Dorsolateral prefrontal cortex (tissue), 120 donors: ENCODE measurements at regions of chr5 and their contacts with region 1.

Region 1: DNA sequence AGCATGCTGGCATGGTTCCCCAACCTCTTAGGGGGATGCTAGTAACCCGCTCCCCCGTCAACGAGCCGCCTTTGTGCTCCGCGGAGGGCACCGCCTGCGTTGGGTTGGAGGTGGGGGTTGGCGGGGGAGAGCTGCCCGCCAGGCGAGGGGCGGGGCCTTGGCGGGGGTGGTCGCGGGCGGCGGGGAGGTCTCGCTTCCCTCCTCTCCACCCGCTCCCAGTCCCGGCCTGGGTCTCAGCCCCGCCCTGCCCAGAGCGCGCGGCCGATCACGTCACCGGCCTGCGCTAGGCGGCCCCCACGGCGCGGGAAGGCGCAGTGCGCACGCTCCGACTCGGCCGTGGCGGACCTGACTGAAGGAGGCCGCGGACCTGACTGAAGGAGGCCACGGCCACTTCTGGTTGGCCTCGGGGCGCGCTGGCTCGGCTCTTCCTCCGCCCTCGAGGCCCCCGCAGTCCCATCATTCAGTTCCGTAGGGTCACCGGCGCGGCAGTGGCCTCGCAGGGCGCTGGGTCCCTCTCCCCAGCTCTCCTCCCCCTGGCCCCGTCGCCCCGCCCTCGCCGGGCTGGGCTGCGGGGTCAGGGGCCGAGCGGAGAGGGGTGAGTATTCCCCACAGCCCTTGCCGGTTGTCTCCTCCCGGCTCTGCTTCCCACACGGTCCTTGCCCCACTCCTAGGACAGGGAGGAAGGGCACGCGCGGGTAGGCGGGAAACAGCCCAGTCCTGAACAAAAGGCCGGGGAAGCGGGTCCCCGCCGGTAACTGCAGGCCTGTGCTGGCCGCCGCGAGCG is at the start of gene ATG10:
- DNase-seq: peak; percentile 81 to 98 (median 92)
- H3K4me3 ChIP-seq: peak within 1 kb of the TSS; percentile 55 to 96 (median 80)
- H3K27ac ChIP-seq: peak within 1 kb of the TSS; percentile 88 to 100 (median 99)
- H3K27me3 ChIP-seq: no peaks in the 10 kb centered on the region
- CTCF ChIP-seq: peak in 14 of 56 donors; percentile 2 to 44 (median 17)
- total RNA-seq, gene ATG10: 6.7 to 22.6 (median 12.7) TPM

Region 2: DNA sequence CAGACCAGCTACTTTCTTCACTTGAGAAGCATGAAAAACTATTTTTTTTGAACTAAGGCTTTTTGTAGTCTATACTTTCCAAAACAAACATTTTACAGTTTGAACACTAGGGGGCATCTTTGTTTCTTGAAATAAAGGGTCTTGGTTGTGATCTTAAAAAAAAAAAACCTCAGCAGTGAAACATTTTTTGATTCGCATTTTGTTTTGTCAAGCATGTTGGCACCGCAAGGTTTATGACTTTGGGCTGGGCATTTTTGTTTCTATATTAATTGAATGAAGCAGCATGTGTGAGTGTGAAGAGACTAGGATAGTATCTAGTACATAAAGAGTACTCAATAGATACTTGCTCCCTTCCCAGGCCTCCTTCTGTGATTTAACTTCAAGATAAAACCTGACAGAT is 546.3 kb before region 1 on chr5:
- intact Hi-C with region 1: loop called in 1 of 2 experiments (anchors 10 kb)
- DNase-seq: no peak
- H3K4me3 ChIP-seq: peak overlapping the region in 1 of 59 donors; percentile 14
- H3K27ac ChIP-seq: peak overlapping the region in 41 of 59 donors; percentile 0 to 67 (median 39)
- H3K27me3 ChIP-seq: no peaks in the 10 kb centered on the region
- CTCF ChIP-seq: peak; percentile 64 to 93 (median 79)

Region 3: DNA sequence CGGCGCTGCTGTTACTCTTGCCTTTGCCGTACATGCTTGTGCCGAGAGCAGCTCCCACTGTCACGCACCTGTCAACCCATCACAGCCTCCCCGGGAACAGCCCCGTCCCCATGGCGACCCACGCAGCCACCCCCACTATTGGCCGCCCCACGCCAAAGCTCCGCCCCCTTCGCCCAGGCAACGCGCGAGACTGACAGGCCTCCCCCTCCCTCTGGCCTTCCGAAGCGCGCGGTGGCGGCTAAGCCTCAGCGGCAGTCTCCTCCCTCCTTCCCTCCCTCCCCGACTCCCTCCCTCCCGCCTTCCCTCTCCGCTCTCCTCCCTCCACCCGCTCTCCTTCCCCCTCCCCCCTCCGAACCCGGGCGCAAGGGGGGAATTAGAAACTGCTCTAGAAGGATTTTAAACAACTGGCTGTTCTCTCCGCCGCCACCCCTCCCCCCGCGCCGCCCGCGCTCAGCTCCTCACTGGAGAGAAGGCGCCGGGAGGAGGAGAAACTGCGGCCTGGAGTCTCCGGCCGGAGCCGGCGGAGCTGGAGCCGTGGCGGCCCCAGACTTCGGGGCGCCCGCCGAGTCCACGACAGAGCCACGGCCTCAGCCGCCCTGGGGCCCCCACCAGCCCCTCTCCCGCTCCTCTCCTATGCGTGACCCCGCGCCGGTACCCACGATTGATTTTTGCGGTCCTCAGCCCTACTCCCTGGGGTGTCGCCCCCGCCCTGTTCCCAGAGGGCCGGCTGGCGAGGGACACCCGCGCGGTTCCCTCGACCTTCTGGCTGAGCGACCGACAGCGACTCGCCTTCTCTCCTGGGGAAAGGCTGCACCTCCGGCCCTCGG is 220.7 kb before region 1 on chr5 and contains the start of gene SSBP2:
- intact Hi-C with region 1: loop called (anchors 1 kb)
- DNase-seq: peak; percentile 98 to 100 (median 99)
- H3K4me3 ChIP-seq: peak within 1 kb of the TSS; percentile 57 to 97 (median 80)
- H3K27ac ChIP-seq: peak within 1 kb of the TSS; percentile 95 to 100 (median 99)
- H3K27me3 ChIP-seq: no peaks in the 10 kb centered on the region
- CTCF ChIP-seq: peak in 11 of 56 donors; percentile 5 to 38 (median 25)
- total RNA-seq, gene SSBP2: 66.2 to 139 (median 94.4) TPM

Region 4: GRCh38 chr5:81851481-81852178 is 120.3 kb before region 1 on chr5:
- intact Hi-C with region 1: loop called (anchors 2 kb)
- DNase-seq: peak; percentile 94 to 98 (median 96)
- H3K4me3 ChIP-seq: peak overlapping the region; percentile 44 to 81 (median 61)
- H3K27ac ChIP-seq: peak overlapping the region; percentile 81 to 99 (median 97)
- H3K27me3 ChIP-seq: no peaks in the 10 kb centered on the region
- CTCF ChIP-seq: peak in 27 of 56 donors; percentile 4 to 49 (median 25)

Region 5: DNA sequence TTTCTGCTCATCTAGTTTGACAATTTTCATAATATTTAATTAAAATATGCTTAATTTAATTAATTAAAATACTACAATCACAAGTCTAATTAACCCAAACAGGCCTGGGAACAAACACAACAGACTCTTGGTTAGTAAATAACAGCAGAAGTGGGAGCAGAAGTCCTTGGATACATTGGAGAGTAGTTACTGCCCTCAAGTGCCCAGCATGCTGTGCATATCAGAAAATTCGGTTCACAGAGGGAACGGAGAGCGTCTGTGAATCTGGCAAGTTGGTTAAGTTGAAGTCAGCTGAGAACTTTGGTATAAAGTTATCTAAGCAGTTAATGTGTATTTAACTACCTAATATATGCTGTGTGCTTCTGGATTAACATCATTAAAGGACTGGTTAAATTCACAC is 87.0 kb before region 1 on chr5:
- intact Hi-C with region 1: no loop called
- DNase-seq: no peak
- H3K4me3 ChIP-seq: no peak overlapping the region
- H3K27ac ChIP-seq: no peak overlapping the region
- H3K27me3 ChIP-seq: no peaks in the 10 kb centered on the region
- CTCF ChIP-seq: peak in 34 of 56 donors; percentile 10 to 66 (median 36)

Region 6: DNA sequence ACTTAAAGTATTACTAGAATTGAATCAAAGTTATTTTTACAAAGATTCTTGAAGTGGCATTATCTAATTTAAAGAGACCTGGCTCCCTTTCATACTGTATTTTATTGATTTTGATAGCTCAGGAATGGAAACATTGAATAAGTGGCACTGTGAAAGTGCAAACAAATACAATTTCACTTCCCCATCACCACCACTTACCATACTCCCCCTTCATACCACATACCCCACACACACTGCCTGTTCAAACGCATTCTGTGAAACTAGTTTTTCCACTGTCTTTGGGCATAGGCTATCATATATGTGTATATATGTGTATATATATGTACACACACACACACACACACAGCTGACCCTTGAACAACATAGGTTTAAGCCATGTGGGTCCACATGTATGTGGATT is 62.2 kb before region 1 on chr5:
- intact Hi-C with region 1: loop called in 1 of 2 experiments (anchors 5 kb)
- DNase-seq: no peak
- H3K4me3 ChIP-seq: no peak overlapping the region
- H3K27ac ChIP-seq: no peak overlapping the region
- H3K27me3 ChIP-seq: no peaks in the 10 kb centered on the region
- CTCF ChIP-seq: no peak

Region 7: GRCh38 chr5:82107267-82107666 is 135.4 kb after region 1 on chr5:
- intact Hi-C with region 1: loop called in 1 of 2 experiments (anchors 5 kb)
- DNase-seq: no peak
- H3K4me3 ChIP-seq: peak overlapping the region in 9 of 59 donors; percentile 3 to 18 (median 10)
- H3K27ac ChIP-seq: peak overlapping the region in 27 of 59 donors; percentile 1 to 73 (median 31)
- H3K27me3 ChIP-seq: no peaks in the 10 kb centered on the region
- CTCF ChIP-seq: peak; percentile 18 to 74 (median 57)